ENCODE measurements at regions of chr9 and their contacts with region 1.

Region 1: GRCh38 chr9:124940693-124941453 is at the start of gene GOLGA1:
- DNase-seq: peak; percentile 92
- H3K4me3 Mint-ChIP-seq: peak within 1 kb of the TSS; percentile 94
- H3K27ac Mint-ChIP-seq: peak within 1 kb of the TSS; percentile 99
- H3K4me1 Mint-ChIP-seq: peaks cover 29% of the 10 kb centered on the region
- H3K27me3 Mint-ChIP-seq: no peaks in the 10 kb centered on the region
- total RNA-seq, gene GOLGA1: 16.6 TPM in 2 replicates

Region 2: DNA sequence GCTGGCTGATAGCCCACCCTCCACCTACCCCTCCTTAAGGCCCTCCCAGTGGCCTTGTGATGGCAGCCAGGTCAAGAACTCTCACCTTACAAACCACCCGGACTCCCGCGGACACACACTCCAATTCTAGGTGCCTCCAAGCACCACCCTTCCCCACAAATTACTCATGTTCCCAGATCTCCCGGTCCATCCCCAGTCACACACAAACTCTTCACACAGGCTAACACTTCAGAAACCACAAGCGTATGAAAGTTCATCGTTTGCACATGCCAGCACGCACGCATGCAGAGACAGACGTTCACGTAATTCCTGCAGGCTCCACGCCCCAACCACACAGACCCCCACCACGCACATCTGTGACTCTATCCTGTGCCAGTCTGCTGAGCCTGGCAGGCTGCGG is 451.7 kb before region 1 on chr9:
- intact Hi-C with region 1: no loop called
- DNase-seq: no peak
- H3K4me3 Mint-ChIP-seq: no peak overlapping the region
- H3K27ac Mint-ChIP-seq: no peak overlapping the region
- H3K4me1 Mint-ChIP-seq: no peaks in the 10 kb centered on the region
- H3K27me3 Mint-ChIP-seq: peaks cover 3% of the 10 kb centered on the region

Region 3: DNA sequence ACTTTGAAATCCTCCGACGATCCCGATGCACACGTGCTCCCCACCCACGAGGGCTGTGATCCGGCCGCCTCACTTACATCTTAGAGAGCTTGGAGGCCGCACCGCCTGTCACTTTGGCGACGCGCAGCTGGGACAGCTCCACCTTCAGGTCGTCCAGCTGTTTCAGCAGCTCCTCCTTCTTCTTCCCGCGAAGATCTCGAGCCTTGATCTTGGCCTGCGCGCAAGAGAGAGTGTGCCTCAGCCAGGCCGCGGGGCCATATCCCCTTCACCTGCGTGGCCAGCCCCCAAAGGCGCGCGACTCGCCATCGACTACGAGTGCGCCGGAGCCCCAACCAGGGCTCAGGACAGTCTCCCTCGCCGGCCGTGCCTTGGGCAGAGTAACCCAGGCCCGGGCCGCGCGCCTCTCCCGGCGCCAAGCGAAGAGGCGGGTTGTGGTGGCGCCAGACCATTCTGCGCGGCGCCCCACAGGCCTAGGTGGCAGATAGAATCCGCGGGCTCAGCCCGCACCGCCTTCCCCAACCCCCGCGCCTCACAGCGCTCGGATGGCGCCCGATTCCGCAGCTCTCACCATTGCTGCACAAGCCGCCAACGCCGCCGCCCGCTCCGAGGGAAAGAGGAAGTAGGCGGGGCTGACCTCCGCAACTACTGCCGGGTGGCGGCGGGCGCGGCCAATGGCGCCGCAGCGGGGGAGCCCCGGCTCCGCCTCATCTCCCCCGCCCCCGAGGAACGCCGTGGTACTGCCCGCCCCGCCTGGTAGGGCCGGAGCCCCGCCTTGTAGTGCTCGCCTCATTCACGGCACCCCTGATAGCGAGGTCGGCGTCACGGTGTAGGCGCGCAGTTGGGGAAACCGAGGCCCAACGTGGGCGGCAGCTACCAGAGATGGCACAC is 79.3 kb before region 1 on chr9 and contains the starts of genes ARPC5L and RPL35:
- intact Hi-C with region 1: loop called (anchors 1 kb)
- DNase-seq: peak; percentile 95
- H3K4me3 Mint-ChIP-seq: peak within 1 kb of the TSS; percentile 96
- H3K27ac Mint-ChIP-seq: peak within 1 kb of the TSS; percentile 98
- H3K4me1 Mint-ChIP-seq: peaks cover 35% of the 10 kb centered on the region
- H3K27me3 Mint-ChIP-seq: no peaks in the 10 kb centered on the region
- total RNA-seq, gene ARPC5L: 111 and 115 TPM in 2 replicates
- total RNA-seq, gene RPL35: 1,681 and 1,750 TPM in 2 replicates

Region 4: DNA sequence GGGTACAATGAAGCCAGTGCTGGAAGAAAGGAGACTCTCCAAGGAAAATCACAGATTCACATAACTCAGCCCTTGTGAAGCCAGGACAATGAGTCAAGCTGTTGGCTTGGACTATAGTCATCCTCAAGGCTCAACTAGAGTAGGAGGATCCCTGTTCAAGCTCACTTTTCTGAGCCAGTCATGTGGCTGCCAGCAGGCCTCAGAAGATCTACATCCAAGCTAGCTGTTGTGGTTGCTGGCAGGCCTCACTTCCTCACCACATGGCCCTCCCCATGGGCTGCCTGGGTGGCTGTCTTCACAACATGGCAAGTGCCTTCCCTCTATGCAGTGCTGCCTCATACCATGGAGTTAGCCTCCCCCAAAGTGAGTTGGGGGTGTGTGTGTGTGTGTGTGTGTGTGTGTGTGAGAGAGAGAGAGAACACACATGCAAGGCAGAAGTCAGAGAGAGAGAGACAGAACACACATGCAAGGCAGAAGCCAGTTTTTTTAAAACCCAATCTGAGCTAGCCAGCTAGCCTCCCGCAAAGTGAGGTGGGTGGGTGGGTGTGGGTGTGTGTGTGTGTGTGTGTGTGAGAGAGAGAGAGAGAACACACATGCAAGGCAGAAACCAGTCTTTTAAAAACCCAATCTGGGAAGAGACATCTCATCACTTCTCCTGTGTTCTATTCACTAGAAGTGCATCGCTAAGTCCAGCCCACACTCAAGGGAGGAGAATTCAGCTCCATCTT is 185.3 kb after region 1 on chr9:
- intact Hi-C with region 1: loop called (anchors 5 kb)
- DNase-seq: peak; percentile 77
- H3K4me3 Mint-ChIP-seq: peak overlapping the region; percentile 62
- H3K27ac Mint-ChIP-seq: peak overlapping the region; percentile 98
- H3K4me1 Mint-ChIP-seq: peaks cover 36% of the 10 kb centered on the region
- H3K27me3 Mint-ChIP-seq: no peaks in the 10 kb centered on the region

Region 5: DNA sequence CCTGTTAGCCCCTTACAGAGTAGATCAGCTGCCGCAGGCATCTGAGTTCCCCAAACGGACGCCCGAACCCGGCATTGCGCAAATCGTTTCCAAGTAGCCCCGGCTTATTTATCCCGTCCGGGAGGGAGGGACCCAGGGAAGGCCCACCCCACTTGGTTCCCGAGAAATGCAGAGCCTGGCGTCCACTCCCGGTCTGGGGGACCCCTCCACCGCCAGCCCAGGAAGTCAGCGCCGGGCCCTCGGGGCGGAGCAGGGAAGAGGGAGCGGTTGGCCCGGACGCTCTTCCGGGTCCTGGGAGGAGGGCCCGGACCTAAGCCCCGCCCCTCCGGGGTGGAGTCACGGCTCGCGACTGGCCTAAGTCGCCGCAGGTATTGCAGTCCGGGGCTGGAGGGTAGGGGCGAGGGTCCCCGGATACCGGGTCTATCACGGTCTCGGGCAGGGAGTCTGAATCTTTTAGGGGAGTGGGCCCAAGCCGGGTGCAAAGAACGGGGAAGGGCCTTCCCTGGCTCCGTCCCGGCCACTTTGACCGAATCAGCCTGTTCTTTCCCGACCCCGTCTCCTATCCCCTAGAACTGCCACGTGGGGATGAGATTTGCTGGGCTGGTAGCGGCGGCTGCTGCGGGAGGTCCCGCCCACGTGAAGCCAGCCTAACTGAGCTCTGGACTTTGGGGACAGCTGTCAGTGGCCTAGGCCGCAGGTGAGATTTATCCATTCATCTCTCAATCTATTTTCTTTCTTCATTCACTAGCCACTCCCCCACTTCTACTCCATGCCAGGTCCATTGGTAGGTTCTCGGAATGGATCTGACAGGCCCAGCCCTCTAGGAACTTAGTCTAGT is 259.6 kb after region 1 on chr9 and contains the start of gene RABEPK:
- intact Hi-C with region 1: loop called (anchors 1 kb)
- DNase-seq: peak; percentile 90
- H3K4me3 Mint-ChIP-seq: peak within 1 kb of the TSS; percentile 95
- H3K27ac Mint-ChIP-seq: peak within 1 kb of the TSS; percentile 89
- H3K4me1 Mint-ChIP-seq: peaks cover 21% of the 10 kb centered on the region
- H3K27me3 Mint-ChIP-seq: peaks cover 2% of the 10 kb centered on the region
- total RNA-seq, gene RABEPK: 32.8 and 33.1 TPM in 2 replicates

Region 6: DNA sequence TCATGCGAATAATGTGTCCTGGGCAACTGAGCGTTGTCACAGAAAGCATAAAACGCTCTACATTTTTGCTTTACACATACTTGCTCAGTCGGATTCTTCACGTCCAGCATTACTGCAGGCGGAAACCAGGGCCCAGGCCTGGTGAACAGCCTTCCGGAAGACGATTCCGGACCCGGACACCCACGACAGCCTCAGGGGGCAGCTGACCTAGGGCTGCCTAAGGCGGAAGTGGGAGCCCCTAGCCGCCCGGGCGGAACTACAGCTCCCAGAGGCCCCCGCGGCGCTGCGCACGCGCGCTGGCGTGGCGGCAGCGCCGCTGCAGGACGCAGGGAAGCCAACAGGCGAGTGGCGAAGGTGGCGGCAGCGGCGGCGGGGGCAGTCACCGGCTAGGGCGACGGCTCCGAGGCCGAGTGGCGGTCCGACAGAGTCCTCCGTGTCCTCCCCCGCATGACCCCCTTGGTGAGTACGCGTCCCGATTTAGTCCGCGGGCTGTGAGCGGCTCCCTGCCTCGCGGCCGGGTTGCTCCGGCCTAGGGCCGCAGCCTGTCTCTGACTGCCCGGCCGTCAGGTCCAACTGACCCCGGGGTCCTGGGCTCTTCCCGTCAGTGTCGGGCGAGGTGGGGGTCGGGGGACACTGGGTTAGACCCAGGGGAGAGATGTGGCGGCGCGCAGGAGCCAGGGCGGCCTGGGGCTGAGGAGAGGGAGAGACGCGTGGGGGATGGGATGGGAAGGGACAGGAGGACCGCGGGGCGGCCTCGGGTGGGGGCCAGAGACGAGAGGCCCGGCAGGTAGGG is 320.8 kb after region 1 on chr9 and contains the start of gene GAPVD1:
- intact Hi-C with region 1: loop called (anchors 1 kb)
- DNase-seq: peak; percentile 88
- H3K4me3 Mint-ChIP-seq: peak within 1 kb of the TSS; percentile 99
- H3K27ac Mint-ChIP-seq: peak within 1 kb of the TSS; percentile 93
- H3K4me1 Mint-ChIP-seq: peaks cover 42% of the 10 kb centered on the region
- H3K27me3 Mint-ChIP-seq: no peaks in the 10 kb centered on the region
- total RNA-seq, gene GAPVD1: 53.6 and 56.8 TPM in 2 replicates